ENCODE measurements at regions of chr20 and their contacts with region 1.

Region 1: GRCh38 chr20:3767427-3768341 is at the start of gene ADISSP:
- DNase-seq: peak; percentile 95
- ATAC-seq: peak; percentile 92
- H3K4me3 ChIP-seq: peak within 1 kb of the TSS; percentile 84 to 91
- H3K27ac ChIP-seq: peak within 1 kb of the TSS; percentile 83
- H3K4me1 ChIP-seq: peaks cover 12 to 36% of the 10 kb centered on the region in 2 experiments
- H3K27me3 ChIP-seq: no peaks in the 10 kb centered on the region
- CTCF ChIP-seq: peak in 2 of 3 experiments; percentile 8 to 26; a peak in 2 of 6 replicates
- POLR2A ChIP-seq: peak; percentile 31
- RAD21 ChIP-seq: no peak
- total RNA-seq, gene ADISSP: 99.4 TPM

Region 2: GRCh38 chr20:3781153-3781910 is 13.6 kb after region 1 on chr20 and contains the start of gene SPEF1:
- CTCF ChIA-PET with region 1: interaction called, 23 read pairs
- POLR2A ChIA-PET with region 1: interaction called, 7 read pairs
- RAD21 ChIA-PET with region 1: interaction called in 1 of 2 experiments, 4 read pairs
- intact Hi-C with region 1: no loop called
- DNase-seq: peak; percentile 92
- ATAC-seq: peak; percentile 90
- H3K4me3 ChIP-seq: peak within 1 kb of the TSS; percentile 55 to 64
- H3K27ac ChIP-seq: peak within 1 kb of the TSS; percentile 3; the same call in 1 of the 2 replicates
- H3K4me1 ChIP-seq: peaks cover 7 to 27% of the 10 kb centered on the region in 2 experiments; a peak in 3 of 4 replicates
- H3K27me3 ChIP-seq: no peaks in the 10 kb centered on the region
- CTCF ChIP-seq: peak; percentile 63 to 83 (median 69)
- POLR2A ChIP-seq: no peak
- RAD21 ChIP-seq: peak; percentile 66
- total RNA-seq, gene SPEF1: 0.93 TPM